PC-9 (cell line): ENCODE measurements at regions of chr6 and their contacts with region 1.

Region 1: DNA sequence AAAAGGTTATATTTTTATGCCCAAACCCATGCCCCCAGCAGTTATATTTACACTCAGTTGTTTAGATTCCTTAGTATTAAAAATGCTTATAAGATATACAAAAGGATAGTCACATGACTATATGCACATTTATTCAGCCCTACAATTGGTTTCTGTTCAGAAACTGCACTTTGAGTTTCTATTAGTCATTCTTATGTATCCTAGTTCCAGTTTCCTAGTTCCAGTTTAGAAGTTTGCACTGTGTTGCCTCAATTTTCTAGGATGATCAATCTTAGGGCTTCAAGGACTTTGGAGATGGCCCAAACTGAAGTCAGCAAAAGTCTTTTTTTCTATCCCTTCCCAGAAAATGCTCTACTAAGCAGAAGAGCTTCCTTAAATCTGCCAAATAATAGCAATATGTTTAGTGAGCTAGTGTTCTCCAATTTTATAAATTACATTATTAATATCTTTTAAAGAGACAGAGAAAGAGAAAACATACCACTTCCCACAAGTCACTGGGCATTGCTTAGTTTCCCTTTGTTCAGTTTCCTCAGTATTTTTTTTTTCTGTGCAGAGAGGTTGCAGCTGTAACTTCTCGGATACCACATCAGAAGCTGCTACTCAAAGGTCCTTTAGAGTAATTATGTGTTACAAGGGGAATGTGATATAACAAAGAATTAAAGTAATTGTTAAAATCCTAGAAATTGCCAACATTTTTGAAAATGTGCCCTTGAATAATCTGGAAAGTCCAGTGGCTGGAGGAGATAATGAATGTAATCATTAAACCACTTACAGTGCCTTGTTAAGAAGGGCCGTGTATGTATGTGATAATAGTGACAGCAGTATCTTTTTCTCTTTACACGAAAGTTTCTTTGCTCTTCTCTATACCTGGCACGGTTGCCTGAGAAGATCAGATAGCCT is 138.8 kb downstream of the KHDRBS2 start:
- DNase-seq: no peak
- H3K4me3 ChIP-seq: no peak overlapping the region
- H3K27ac ChIP-seq: no peak overlapping the region
- H3K4me1 ChIP-seq: no peaks in the 10 kb centered on the region
- H3K27me3 ChIP-seq: no peaks in the 10 kb centered on the region
- CTCF ChIP-seq: no peak

Region 2: GRCh38 chr6:62192593-62192992 is 45.4 kb after region 1 on chr6:
- CTCF ChIA-PET with region 1: no interaction called
- POLR2A ChIA-PET with region 1: no interaction called
- intact Hi-C with region 1: loop called (anchors 5 kb)
- DNase-seq: no peak
- H3K4me3 ChIP-seq: no peak overlapping the region
- H3K27ac ChIP-seq: no peak overlapping the region
- H3K4me1 ChIP-seq: no peaks in the 10 kb centered on the region
- H3K27me3 ChIP-seq: no peaks in the 10 kb centered on the region
- CTCF ChIP-seq: no peak